ENCODE measurements at regions of chr20 and their contacts with region 1.

Region 1: DNA sequence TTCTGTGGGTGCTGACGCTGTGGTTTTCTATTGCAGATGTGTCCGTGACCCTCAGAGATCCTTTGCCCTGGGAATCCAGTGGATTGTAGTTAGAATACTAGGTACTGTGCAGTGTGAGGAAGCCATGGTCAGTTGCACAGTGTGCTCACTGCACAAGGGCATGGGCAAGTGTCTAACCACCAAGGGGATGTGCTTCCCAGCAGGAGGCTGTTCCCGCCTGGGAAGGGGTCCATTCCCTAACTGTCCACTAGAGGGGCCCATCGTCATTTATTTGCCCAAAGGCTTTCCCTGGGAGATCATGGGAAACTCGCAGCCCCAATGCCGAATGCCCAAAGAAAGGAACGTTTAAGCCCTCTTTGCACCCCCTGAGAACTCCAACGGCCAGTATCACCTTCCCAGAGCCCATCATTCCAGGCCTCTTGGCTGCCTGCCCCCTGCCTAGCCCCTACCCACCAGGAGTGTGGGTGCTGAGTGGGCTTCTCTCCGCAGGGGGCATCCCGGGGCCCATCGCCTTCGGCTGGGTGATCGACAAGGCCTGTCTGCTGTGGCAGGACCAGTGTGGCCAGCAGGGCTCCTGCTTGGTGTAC is 26.2 kb downstream of the SLCO4A1 start:
- DNase-seq: peak; percentile 81
- H3K4me3 ChIP-seq: no peak overlapping the region
- H3K27ac ChIP-seq: peak overlapping the region in 1 of 4 donors; percentile 81
- H3K4me1 ChIP-seq: peaks cover 8 to 26% (median 20%) of the 10 kb centered on the region in 4 donors
- H3K27me3 ChIP-seq: no peaks in the 10 kb centered on the region
- CTCF ChIP-seq: peak; percentile 81 to 92 (median 86)
- EP300 ChIP-seq: no peak
- POLR2A ChIP-seq: no peak

Region 2: DNA sequence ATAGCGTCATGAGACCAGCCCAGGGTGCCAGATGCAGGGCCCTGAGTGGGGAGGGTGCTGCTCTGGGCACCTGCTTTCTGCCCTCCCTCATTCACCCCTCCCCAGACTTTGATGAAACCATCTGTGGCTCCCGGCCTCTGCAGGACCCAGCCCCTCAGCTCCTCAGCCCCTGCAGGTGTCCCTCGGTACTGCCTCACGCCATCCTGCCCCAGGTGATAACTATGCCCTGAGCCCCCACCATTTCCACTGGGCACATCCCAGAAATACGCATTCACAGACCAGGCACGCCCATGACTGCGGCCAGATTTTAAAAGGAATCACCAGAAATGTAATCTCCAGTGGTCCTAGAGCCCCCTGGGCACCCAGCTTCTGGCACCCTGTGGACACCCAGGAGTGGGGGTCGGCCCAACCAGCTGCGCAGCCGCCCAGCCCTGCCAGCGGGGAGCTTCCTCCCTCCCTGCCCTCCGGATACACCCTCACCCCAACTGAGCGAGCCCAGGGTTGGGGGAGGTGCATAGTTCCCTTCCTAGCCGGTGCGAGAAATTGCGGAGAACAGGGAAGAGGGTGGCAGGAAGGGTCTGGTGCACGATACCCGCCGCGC is 39.5 kb after region 1 on chr20:
- in situ Hi-C with region 1: no loop called
- intact Hi-C with region 1: no loop called
- DNase-seq: no peak
- H3K4me3 ChIP-seq: peak overlapping the region in 3 of 4 donors; percentile 13 to 40 (median 38)
- H3K27ac ChIP-seq: peak overlapping the region in 3 of 4 donors; percentile 60 to 77 (median 75)
- H3K4me1 ChIP-seq: peaks cover 4 to 20% (median 15%) of the 10 kb centered on the region in 4 donors
- H3K27me3 ChIP-seq: peaks cover 54% of the 10 kb centered on the region
- CTCF ChIP-seq: peak in 3 of 5 experiments; percentile 25 to 30 (median 27)
- EP300 ChIP-seq: no peak
- POLR2A ChIP-seq: no peak

Region 3: DNA sequence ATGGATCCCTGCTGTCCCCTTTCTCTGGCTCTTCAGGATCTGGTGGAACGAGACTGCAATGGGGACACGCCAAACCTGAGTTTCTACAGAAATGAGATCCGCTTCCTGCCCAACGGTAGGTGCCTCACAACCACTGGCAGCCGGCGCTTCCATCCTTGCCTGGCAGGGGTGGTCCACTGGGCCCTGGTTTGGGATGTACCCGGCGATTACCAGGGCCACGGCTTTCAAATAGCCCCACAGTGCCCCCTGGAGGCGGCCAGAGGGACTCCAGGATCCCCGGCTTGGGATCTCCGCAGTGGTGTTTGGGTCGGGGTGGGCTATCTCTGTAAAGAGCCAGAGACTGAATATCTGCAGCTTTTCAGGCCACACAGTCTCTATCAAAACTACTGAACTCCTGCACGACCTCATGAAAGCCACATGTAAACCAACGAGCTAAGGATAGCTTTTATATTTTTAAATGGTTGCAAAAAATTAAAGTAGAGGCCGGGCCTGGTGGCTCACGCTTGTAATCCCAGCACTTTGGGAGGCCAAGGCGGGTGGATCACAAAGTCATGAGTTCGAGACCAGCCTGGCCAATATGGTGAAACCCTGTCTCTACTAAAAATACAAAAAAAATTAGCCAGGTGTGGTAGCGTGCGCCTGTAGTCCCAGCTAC is 139.8 kb after region 1 on chr20:
- in situ Hi-C with region 1: loop called in 2 of 4 experiments (anchors 10 kb)
- intact Hi-C with region 1: no loop called
- DNase-seq: peak; percentile 72
- H3K4me3 ChIP-seq: no peak overlapping the region
- H3K27ac ChIP-seq: no peak overlapping the region
- H3K4me1 ChIP-seq: peaks cover 17 to 30% (median 22%) of the 10 kb centered on the region in 4 donors
- H3K27me3 ChIP-seq: no peaks in the 10 kb centered on the region
- CTCF ChIP-seq: peak; percentile 89 to 96 (median 93)
- EP300 ChIP-seq: no peak
- POLR2A ChIP-seq: no peak